ENCODE measurements at regions of chr22 and their contacts with region 1.

Region 1: DNA sequence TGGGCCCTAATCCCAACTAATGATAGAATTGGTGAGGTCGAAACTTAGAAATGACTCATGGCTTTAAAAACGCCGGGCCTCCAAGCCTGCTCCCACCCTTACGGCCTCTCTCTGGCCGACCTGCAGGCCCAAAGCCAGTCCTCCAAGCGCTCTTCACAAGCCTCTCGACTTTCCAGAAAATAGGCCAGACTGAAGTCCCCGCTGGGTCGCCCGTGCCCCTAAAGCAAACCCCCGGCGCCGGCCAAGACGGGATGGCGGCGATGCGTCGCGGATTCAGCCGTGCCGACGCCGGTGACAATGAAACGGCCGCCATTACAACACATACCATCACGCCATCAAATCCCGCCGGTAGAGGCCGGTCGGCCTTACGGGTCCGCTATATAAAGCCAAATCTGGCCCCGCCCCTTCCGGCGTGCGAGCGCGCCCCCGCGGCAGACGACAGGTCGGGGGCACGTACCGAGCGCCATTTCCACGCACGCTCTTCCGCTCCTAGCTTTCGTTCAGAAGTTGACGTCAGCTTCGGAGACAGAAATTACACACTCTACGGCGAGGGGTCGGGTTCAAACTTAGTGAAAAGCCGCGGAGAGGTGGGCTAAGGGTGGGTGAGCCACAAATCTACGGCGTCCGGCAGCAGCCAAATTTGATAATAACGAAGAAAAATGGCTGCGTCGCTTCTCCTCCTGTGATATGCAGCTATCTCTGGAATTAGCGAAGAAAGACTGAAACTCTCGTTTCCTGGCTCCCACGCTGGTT is at the start of gene RPL3:
- DNase-seq: peak; percentile 96
- H3K4me3 Mint-ChIP-seq: peak within 1 kb of the TSS; percentile 92
- H3K27ac Mint-ChIP-seq: peak within 1 kb of the TSS; percentile 98
- H3K4me1 Mint-ChIP-seq: peaks cover 49% of the 10 kb centered on the region
- H3K27me3 Mint-ChIP-seq: peaks cover 4% of the 10 kb centered on the region

Region 2: DNA sequence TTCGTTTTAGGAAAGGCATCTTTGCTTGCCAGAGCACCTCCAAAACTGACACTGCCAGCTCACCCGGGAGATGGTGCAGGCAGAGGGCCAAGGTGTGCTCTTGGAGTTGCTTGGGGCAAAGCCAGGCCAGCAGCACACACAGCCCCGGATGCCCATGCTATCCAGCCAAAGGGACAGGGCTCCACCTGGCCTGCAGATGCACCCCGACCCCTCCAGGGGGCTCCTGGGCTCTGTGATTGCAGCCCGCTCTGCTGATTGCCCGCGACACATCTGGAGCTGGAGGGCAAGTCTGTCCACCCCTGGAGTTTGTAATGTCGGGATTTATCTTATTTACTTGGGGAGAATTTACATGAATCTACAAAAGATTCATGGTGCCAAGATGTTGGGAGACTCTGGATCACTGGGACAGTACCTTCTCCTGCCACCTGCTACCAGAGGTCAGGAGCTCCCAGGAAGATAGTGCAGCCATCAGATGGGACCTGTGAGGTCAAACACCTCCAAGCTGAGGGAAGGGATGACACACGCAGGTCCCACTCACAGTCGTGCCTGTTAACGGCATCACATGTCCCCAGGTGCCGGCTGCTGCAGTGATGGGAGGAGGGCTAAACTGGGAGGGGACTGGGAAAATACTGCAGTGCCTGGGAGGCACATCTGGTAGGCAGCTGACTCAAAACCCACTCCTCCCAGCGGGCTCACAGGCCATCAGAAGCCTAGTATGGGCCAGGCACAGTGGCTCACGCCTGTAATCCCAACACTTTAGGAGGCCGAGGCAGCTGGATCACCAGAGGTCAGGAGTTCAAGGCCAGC is 184.2 kb before region 1 on chr22:
- CTCF ChIA-PET with region 1: interaction called, 11 read pairs
- DNase-seq: peak; percentile 67
- H3K4me3 Mint-ChIP-seq: no peak overlapping the region
- H3K27ac Mint-ChIP-seq: no peak overlapping the region
- H3K4me1 Mint-ChIP-seq: peaks cover 6% of the 10 kb centered on the region
- H3K27me3 Mint-ChIP-seq: peaks cover 10% of the 10 kb centered on the region

Region 3: DNA sequence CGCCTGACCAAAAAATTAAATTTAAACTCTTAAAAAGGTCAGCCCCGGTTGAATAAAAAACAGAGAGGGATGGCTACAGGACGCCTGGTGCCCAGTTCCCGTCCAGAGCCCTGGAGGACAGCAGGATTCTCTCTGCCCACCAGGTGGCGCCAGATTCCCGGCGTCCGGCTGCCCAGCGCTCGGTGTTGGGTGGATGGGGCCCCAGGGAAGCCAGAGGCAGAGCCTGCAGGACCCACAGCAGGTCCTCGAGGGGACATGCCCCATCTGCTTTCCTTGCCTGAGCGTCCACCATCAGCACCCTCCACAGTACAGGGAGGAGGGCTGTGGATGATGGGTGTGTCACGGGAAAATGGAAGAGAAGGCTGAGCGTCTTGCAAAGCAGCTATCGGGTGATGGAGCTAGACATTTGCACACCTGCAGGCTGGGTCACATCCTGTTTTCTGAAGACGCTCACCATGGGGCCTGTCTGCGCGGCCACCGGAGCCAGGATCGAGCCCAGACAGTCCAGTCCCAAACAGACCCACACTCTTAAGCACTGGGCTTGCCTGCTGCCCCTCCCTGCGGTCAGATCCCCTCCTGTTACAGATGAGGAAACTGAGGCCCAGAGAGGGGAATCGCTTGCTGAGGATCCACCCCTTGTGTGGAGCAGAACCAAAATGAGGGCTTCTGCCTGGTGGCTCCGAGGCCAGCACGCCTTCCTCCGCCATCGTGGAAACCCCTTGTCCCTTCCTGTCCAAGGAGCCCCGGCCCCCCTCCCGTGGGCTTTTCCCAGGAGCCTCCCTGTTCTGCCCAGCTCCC is 148.4 kb before region 1 on chr22:
- CTCF ChIA-PET with region 1: interaction called, 91 read pairs
- DNase-seq: peak; percentile 88
- H3K4me3 Mint-ChIP-seq: peak overlapping the region; percentile 18
- H3K27ac Mint-ChIP-seq: peak overlapping the region; percentile 89
- H3K4me1 Mint-ChIP-seq: peaks cover 44% of the 10 kb centered on the region
- H3K27me3 Mint-ChIP-seq: peaks cover 17% of the 10 kb centered on the region

Region 4: GRCh38 chr22:39306581-39307361 is 12.7 kb before region 1 on chr22:
- CTCF ChIA-PET with region 1: interaction called, 13 read pairs
- DNase-seq: peak; percentile 71
- H3K4me3 Mint-ChIP-seq: no peak overlapping the region
- H3K27ac Mint-ChIP-seq: no peak overlapping the region
- H3K4me1 Mint-ChIP-seq: peaks cover 3% of the 10 kb centered on the region
- H3K27me3 Mint-ChIP-seq: peaks cover 8% of the 10 kb centered on the region

Region 5: DNA sequence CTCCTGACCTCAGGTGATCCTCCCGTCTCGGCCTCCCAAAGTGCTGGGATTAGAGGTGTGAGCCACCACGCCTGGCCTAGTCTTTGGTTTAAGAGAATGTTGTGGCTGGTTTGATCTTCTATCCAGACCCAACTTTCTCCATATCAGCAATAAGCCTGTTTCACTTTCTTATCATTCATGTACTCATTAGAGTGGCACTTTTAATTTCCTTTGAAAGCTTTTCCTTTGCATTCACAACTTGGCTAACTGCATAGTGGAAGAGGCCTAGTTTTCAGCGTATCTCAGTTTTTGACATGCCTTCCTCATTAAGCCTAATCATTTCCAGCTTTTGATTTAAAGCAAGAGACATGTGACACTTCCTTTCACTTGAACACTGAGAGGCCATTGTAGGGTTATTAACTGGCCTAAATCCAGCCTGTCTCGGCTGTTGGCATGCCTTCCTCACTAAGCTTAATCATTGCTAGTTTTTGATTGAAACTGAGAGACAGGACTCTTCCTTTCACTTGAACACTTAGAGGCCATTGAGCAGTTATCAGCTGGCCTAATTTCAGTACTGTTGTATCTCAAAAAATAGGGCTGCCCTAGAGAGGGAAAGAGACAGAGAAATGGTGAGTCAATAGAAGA is 13.1 kb after region 1 on chr22:
- CTCF ChIA-PET with region 1: interaction called, 22 read pairs
- DNase-seq: no peak
- H3K4me3 Mint-ChIP-seq: no peak overlapping the region
- H3K27ac Mint-ChIP-seq: no peak overlapping the region
- H3K4me1 Mint-ChIP-seq: peaks cover 17% of the 10 kb centered on the region
- H3K27me3 Mint-ChIP-seq: peaks cover 7% of the 10 kb centered on the region